ENCODE measurements at regions of chr6 and their contacts with region 1.

Region 1: DNA sequence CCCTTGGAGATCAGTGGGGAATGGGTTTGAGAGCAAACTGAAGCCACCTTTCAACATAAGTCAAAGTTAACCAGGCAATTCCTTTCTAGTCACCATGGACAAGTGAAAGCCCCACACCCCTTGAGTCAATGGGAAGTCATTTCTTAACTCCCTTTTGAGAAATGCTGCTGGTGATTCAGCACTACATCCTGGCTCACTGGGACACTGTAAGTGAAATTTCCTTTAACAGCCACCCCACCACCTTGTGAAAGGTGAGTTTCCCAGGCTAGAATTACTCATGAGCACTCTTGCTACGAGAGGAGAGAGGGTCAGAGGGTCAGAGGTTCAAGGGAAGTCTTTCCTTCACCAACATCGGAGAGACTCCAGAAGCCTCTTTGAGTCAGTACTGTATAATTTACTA is 93.3 kb upstream of the MARCKS start:
- DNase-seq: peak; percentile 98
- H3K4me3 ChIP-seq: no peak overlapping the region
- H3K27ac ChIP-seq: peak overlapping the region; percentile 89
- H3K4me1 ChIP-seq: peaks cover 17% of the 10 kb centered on the region
- H3K27me3 ChIP-seq: no peaks in the 10 kb centered on the region
- CTCF ChIP-seq: no peak

Region 2: DNA sequence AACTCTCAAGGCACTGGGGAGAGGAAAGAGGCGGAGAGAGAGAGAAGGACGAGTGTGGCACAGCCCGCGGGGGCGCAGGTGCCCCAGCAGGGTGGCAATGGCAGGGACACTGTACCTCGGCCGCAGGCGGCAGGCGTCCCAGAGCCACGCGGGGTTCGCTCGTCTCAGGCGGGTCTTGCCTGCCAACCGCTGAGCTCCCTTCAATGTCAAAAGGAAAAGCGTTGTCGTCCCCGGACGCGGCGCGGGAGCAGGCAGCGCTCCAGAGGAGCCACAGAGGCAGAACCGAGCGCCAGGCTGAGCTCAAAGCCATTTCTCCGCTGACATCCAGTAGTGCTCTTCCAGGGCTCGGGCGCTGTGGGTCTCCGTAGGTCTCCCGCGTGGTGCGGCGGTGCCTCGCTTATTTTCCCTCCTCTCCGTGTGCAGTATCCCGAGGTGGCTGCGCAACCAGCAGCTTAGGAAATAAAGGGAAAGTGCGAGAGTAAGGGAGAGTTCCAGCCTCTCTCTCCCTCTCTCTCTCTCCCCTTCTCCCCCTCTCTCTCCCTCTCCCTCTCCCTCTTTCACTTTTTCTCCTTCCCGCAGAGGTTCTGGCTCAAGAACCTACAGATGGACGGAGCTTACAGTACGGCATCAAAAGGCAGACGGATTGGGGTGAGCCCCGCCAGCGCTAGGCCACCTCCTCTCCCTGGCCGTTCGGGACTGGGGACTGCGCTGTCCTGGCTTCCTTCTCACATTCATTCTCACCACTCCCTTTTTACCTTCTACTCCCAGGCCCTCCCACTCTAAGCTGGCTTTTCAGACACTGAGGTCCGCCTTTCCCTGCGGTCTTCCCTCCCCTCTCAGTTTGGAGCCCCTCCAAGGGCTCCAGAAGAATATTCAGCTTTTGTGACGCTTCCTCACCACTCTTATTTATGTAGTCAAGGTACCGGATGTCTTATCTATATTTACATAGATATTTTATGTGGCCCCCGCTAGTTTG is 1509.8 kb before region 1 on chr6 and contains the start of gene LAMA4:
- CTCF ChIA-PET with region 1: interaction called, 17 read pairs
- dilution Hi-C with region 1: no loop called
- in situ Hi-C with region 1: no loop called
- intact Hi-C with region 1: no loop called
- DNase-seq: peak; percentile 32
- H3K4me3 ChIP-seq: peak within 1 kb of the TSS; percentile 52 to 61 (median 57)
- H3K27ac ChIP-seq: no peak within 1 kb of the TSS
- H3K4me1 ChIP-seq: peaks cover 4% of the 10 kb centered on the region
- H3K27me3 ChIP-seq: no peaks in the 10 kb centered on the region
- CTCF ChIP-seq: no peak
- total RNA-seq, gene LAMA4: 0.35 to 1.2 TPM

Region 3: GRCh38 chr6:113697632-113698410 is 66.1 kb before region 1 on chr6:
- CTCF ChIA-PET with region 1: no interaction called
- dilution Hi-C with region 1: no loop called
- in situ Hi-C with region 1: no loop called
- intact Hi-C with region 1: loop called (anchors 2 kb)
- DNase-seq: peak; percentile 89
- H3K4me3 ChIP-seq: no peak overlapping the region
- H3K27ac ChIP-seq: no peak overlapping the region
- H3K4me1 ChIP-seq: peaks cover 30% of the 10 kb centered on the region
- H3K27me3 ChIP-seq: no peaks in the 10 kb centered on the region
- CTCF ChIP-seq: no peak

Region 4: GRCh38 chr6:114650891-114651290 is 887.0 kb after region 1 on chr6:
- CTCF ChIA-PET with region 1: no interaction called
- dilution Hi-C with region 1: no loop called
- in situ Hi-C with region 1: no loop called
- intact Hi-C with region 1: no loop called
- DNase-seq: no peak
- H3K4me3 ChIP-seq: no peak overlapping the region
- H3K27ac ChIP-seq: no peak overlapping the region
- H3K4me1 ChIP-seq: no peaks in the 10 kb centered on the region
- H3K27me3 ChIP-seq: no peaks in the 10 kb centered on the region
- CTCF ChIP-seq: no peak